MCF 10A (cell line): ENCODE measurements at regions of chr9 and their contacts with region 1.

Region 1: GRCh38 chr9:72577212-72577753 is 55.9 kb downstream of the TMC1 start:
- DNase-seq: peak; percentile 95
- H3K4me3 Mint-ChIP-seq: peak overlapping the region; percentile 15
- H3K27ac Mint-ChIP-seq: peak overlapping the region; percentile 53
- H3K4me1 Mint-ChIP-seq: peaks cover 36% of the 10 kb centered on the region
- H3K27me3 Mint-ChIP-seq: no peaks in the 10 kb centered on the region
- CTCF ChIP-seq: no peak

Region 2: DNA sequence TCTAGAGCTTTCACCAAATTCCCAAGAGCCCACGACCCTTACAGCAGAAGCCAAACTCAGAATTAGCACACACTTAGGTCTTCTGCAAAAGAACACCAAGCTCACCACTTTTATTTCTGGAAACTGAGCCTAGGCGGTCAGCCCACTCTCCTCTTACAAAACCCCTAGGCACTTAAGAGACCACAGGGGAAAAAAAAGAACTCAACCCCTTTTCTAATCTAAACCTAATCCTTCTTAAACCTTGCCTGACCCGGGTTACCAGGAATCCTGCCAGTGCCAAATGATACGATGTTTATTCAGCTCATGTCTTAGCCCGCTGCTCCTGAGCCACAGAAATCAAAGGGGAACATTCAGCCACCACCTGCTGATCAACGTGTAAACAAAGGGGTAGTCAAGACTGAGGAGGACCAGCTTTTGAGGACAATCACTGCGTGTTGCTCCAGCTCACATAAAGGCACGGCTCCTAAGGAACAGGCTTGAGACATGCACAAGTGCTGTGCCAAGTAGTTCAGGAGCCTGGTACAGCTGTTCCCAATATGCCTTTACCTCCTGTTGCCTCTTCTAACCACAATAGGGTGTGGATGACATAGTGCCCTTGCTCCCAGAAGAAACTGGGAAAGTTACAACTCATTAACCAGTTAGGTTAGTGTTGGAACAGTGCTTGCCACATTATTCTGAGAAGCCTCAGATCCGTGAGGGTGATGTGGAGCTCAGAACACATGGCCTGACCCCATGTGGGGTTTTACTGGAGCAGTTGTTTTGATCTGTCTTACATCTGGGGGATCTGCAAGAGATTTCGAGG is 261.6 kb before region 1 on chr9:
- CTCF ChIA-PET with region 1: no interaction called
- POLR2A ChIA-PET with region 1: no interaction called
- intact Hi-C with region 1: no loop called
- DNase-seq: peak; percentile 64
- H3K4me3 Mint-ChIP-seq: no peak overlapping the region
- H3K27ac Mint-ChIP-seq: peak overlapping the region; percentile 91
- H3K4me1 Mint-ChIP-seq: peaks cover 20% of the 10 kb centered on the region
- H3K27me3 Mint-ChIP-seq: no peaks in the 10 kb centered on the region
- CTCF ChIP-seq: no peak

Region 3: GRCh38 chr9:72379121-72379520 is 198.2 kb before region 1 on chr9:
- CTCF ChIA-PET with region 1: no interaction called
- POLR2A ChIA-PET with region 1: no interaction called
- intact Hi-C with region 1: no loop called
- DNase-seq: no peak
- H3K4me3 Mint-ChIP-seq: no peak overlapping the region
- H3K27ac Mint-ChIP-seq: no peak overlapping the region
- H3K4me1 Mint-ChIP-seq: peaks cover 3% of the 10 kb centered on the region
- H3K27me3 Mint-ChIP-seq: no peaks in the 10 kb centered on the region
- CTCF ChIP-seq: no peak

Region 4: DNA sequence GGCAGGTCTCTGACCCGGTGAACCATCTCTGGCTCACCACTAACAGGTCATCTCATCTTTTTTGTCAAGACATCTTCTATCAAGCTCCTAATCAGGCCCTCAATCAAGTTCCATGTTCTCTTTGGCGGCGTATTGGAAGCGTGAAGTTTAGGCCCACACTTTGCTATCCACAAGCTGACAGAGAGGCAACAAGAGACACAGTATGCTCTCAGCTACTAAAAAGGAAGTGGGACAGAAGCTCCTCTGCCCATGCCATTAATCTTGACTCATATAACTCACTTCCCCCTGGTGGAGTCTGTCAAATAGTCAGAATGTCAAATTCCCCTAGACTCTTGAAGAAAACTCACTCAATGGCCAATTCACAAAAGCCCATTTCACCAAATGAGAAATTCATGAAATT is 133.4 kb before region 1 on chr9:
- CTCF ChIA-PET with region 1: no interaction called
- POLR2A ChIA-PET with region 1: interaction called, 11 read pairs
- intact Hi-C with region 1: no loop called
- DNase-seq: no peak
- H3K4me3 Mint-ChIP-seq: no peak overlapping the region
- H3K27ac Mint-ChIP-seq: peak overlapping the region; percentile 1
- H3K4me1 Mint-ChIP-seq: peaks cover 31% of the 10 kb centered on the region
- H3K27me3 Mint-ChIP-seq: no peaks in the 10 kb centered on the region
- CTCF ChIP-seq: no peak

Region 5: GRCh38 chr9:72473474-72474261 is 103.6 kb before region 1 on chr9:
- CTCF ChIA-PET with region 1: interaction called, 3 read pairs
- POLR2A ChIA-PET with region 1: interaction called, 12 read pairs
- intact Hi-C with region 1: no loop called
- DNase-seq: no peak
- H3K4me3 Mint-ChIP-seq: no peak overlapping the region
- H3K27ac Mint-ChIP-seq: no peak overlapping the region
- H3K4me1 Mint-ChIP-seq: peaks cover 20% of the 10 kb centered on the region
- H3K27me3 Mint-ChIP-seq: no peaks in the 10 kb centered on the region
- CTCF ChIP-seq: no peak

Region 6: DNA sequence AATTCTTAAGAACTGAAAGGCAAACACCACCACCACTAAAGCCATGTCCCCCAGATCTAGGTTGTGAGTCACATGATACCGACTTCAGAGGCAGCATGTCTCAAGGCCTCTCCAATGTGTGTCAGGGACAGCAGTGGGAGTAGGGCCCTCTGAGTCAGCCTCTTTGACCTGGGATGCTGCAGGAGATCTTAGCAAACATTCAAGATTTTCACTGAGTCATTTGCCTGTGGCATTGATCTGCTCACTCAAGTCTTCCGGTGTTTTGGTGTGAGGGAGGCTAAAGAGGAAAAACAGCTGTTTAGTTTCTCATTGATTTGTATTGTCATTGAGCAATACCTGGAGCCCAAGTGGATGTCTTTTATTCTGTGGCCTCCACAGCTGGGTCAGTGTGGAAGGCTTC is 19.7 kb before region 1 on chr9:
- CTCF ChIA-PET with region 1: interaction called, 7 read pairs
- POLR2A ChIA-PET with region 1: interaction called, 52 read pairs
- intact Hi-C with region 1: no loop called
- DNase-seq: peak; percentile 93
- H3K4me3 Mint-ChIP-seq: no peak overlapping the region
- H3K27ac Mint-ChIP-seq: peak overlapping the region; percentile 91
- H3K4me1 Mint-ChIP-seq: peaks cover 24% of the 10 kb centered on the region
- H3K27me3 Mint-ChIP-seq: no peaks in the 10 kb centered on the region
- CTCF ChIP-seq: no peak

Region 7: GRCh38 chr9:72599879-72600534 is 22.7 kb after region 1 on chr9:
- CTCF ChIA-PET with region 1: no interaction called
- POLR2A ChIA-PET with region 1: no interaction called
- intact Hi-C with region 1: no loop called
- DNase-seq: no peak
- H3K4me3 Mint-ChIP-seq: no peak overlapping the region
- H3K27ac Mint-ChIP-seq: no peak overlapping the region
- H3K4me1 Mint-ChIP-seq: peaks cover 7% of the 10 kb centered on the region
- H3K27me3 Mint-ChIP-seq: no peaks in the 10 kb centered on the region
- CTCF ChIP-seq: no peak

Region 8: GRCh38 chr9:72843520-72844439 is 266.5 kb after region 1 on chr9:
- CTCF ChIA-PET with region 1: no interaction called
- POLR2A ChIA-PET with region 1: no interaction called
- intact Hi-C with region 1: no loop called
- DNase-seq: peak; percentile 12
- H3K4me3 Mint-ChIP-seq: no peak overlapping the region
- H3K27ac Mint-ChIP-seq: no peak overlapping the region
- H3K4me1 Mint-ChIP-seq: no peaks in the 10 kb centered on the region
- H3K27me3 Mint-ChIP-seq: peaks cover 50% of the 10 kb centered on the region
- CTCF ChIP-seq: no peak